Activated CD4-positive, alpha-beta memory T cell treated with anti-CD3 and anti-CD28 coated beads for 36 hours (primary cell): ENCODE measurements at regions of chr7 and their contacts with region 1.

Region 1: GRCh38 chr7:23357190-23358093 is 58.3 kb downstream of the MALSU1 start:
- DNase-seq: no peak
- H3K4me3 Mint-ChIP-seq: no peak overlapping the region
- H3K27ac Mint-ChIP-seq: no peak overlapping the region
- H3K4me1 Mint-ChIP-seq: peaks cover 20% of the 10 kb centered on the region
- H3K27me3 Mint-ChIP-seq: peaks cover 17% of the 10 kb centered on the region

Region 2: GRCh38 chr7:23306936-23307521 is 50.4 kb before region 1 on chr7:
- CTCF ChIA-PET with region 1: interaction called, 3 read pairs
- POLR2A ChIA-PET with region 1: no interaction called
- intact Hi-C with region 1: loop called (anchors 1 kb)
- DNase-seq: no peak
- H3K4me3 Mint-ChIP-seq: no peak overlapping the region
- H3K27ac Mint-ChIP-seq: peak overlapping the region; percentile 55
- H3K4me1 Mint-ChIP-seq: peaks cover 45% of the 10 kb centered on the region
- H3K27me3 Mint-ChIP-seq: no peaks in the 10 kb centered on the region

Region 3: DNA sequence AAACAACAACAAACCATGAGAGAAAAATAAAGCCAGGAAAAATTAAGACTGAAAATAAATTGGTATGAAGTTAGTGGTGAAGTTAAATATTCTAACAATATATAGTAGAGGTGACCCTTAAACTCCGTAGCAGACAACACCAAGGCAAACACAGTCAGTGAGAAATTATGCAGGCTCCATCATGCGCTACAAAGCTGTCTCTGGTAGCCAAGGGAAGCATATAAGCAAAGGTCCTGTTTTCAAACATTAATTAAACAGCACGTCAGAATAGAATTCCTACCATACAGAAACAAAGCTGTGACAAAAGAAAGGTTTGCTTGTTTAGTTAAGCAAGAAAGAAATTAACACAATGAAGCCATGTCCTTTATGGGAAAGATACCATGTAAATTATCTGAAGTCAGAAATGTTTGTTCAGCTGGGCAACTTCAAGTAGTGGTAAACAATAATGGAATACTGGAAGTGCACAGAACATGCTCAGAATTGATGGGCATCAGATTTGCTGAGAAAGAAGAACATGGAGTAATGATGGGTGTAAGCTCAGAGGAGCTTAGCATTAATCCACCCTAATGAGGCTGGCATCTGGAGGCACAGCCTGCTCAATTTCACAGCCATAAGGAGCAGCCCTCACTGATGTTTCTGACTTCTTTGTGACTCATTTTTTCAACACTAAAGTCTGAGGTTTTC is 37.2 kb after region 1 on chr7:
- CTCF ChIA-PET with region 1: interaction called, 9 read pairs
- POLR2A ChIA-PET with region 1: interaction called, 3 read pairs
- intact Hi-C with region 1: loop called (anchors 1 kb)
- DNase-seq: no peak
- H3K4me3 Mint-ChIP-seq: no peak overlapping the region
- H3K27ac Mint-ChIP-seq: no peak overlapping the region
- H3K4me1 Mint-ChIP-seq: peaks cover 20% of the 10 kb centered on the region
- H3K27me3 Mint-ChIP-seq: peaks cover 7% of the 10 kb centered on the region

Region 4: DNA sequence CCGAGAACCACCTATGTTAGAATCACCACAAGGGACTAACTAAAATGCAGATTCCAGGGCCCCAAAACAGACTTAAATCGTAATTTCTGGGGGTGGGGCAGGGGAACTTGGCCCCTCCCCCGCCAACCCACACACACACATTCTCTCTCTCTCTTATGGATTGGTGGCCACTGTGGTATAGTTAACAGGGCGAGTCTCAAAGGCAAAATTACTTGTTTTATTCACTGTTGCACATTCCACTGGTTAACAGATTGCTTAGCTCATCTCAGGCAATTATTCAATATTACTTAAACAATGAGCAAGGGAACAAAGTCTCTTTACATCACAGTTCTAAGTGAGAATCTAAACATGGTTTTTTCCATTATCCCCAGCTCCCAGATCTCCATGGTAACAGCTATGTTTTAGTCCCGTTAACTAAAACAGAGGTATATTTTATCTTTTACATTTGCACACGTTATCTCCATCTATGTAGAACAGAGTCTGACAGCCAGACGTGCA is 74.3 kb after region 1 on chr7:
- CTCF ChIA-PET with region 1: interaction called, 11 read pairs
- POLR2A ChIA-PET with region 1: no interaction called
- intact Hi-C with region 1: no loop called
- DNase-seq: no peak
- H3K4me3 Mint-ChIP-seq: no peak overlapping the region
- H3K27ac Mint-ChIP-seq: no peak overlapping the region
- H3K4me1 Mint-ChIP-seq: no peaks in the 10 kb centered on the region
- H3K27me3 Mint-ChIP-seq: peaks cover 25% of the 10 kb centered on the region

Region 5: DNA sequence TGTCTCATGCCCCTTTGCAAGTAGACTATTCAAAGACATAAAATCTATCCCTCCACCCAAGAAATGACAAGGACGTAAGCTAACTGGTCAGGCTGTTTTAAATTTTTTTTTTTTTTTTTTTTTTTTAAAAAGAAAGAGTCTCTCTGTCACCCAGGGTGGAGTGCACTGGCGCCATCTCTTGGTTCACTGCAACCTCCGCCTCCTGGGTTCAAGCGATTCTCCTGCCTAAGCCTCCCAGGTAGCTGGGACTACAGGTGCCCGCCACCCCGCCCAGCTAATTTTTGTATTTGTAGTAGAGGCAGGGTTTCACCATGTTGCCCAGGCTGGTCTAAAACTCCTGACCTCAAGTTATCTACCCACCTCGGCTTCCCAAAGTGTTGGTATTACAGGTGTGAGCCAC is 163.1 kb after region 1 on chr7:
- CTCF ChIA-PET with region 1: interaction called, 11 read pairs
- POLR2A ChIA-PET with region 1: no interaction called
- intact Hi-C with region 1: no loop called
- DNase-seq: peak; percentile 38
- H3K4me3 Mint-ChIP-seq: no peak overlapping the region
- H3K27ac Mint-ChIP-seq: no peak overlapping the region
- H3K4me1 Mint-ChIP-seq: peaks cover 46% of the 10 kb centered on the region
- H3K27me3 Mint-ChIP-seq: no peaks in the 10 kb centered on the region